ENCODE measurements at regions of chr19 and their contacts with region 1.

Region 1: GRCh38 chr19:23395041-23395721 is at the start of gene ZNF91:
- DNase-seq: peak; percentile 96 to 98
- H3K4me3 ChIP-seq: peak within 1 kb of the TSS; percentile 69 to 90 (median 79)
- H3K27ac ChIP-seq: peak within 1 kb of the TSS; percentile 93 to 97 (median 96)
- H3K4me1 ChIP-seq: peaks cover 23 to 50% (median 36%) of the 10 kb centered on the region in 4 donors
- H3K27me3 ChIP-seq: no peaks in the 10 kb centered on the region
- CTCF ChIP-seq: no peak
- EP300 ChIP-seq: peak; percentile 42
- POLR2A ChIP-seq: peak in 1 of 4 donors; percentile 59
- total RNA-seq, gene ZNF91: 104 to 139 (median 118) TPM

Region 2: DNA sequence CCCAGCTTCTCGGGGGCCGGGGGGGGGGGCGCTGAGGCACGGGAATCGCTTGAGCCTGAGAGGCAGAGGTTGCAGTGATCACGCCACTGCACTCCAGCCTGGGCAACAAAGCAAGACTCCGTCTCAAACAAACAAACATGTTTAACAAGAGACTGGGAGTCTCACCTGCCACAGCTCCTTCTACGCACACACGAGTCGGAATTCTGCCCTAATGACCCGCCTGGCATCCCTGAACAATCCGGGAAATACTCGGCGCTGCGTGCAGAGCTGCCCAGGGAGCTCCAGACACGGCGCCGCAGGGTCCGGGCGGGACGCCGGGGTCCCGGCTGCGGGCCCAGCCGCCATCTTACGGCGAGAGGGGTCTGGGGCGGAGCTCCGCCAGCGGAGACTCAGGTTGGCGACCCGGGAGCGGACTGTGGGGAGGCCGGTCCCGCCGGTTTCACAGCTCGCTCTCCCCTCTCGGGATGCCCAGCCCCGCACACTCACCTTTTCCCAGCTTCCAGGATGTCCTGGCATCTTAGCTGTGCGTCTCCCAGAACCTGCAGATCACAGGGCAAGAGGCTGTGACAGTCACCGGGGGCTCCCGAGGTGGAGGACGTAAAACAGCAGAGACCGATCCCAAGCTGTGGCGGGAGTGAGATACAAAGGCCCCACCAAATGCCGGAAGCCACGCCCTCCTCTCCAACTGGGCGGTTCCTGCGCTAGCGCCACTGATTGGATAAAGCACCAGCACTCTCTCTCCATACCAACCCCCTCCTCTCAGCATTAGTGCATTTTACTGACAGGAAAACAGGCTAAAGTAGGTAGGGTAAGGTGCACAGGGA is 121.4 kb before region 1 on chr19:
- intact Hi-C with region 1: loop called (anchors 10 kb)
- DNase-seq: peak; percentile 93 to 97
- H3K4me3 ChIP-seq: peak overlapping the region; percentile 75 to 98 (median 90)
- H3K27ac ChIP-seq: peak overlapping the region; percentile 89 to 95 (median 89)
- H3K4me1 ChIP-seq: peaks cover 0 to 25% (median 15%) of the 10 kb centered on the region in 4 donors
- H3K27me3 ChIP-seq: no peaks in the 10 kb centered on the region
- CTCF ChIP-seq: no peak
- EP300 ChIP-seq: no peak
- POLR2A ChIP-seq: peak in 2 of 4 donors; percentile 20 to 45